GM13977 (cell line): ENCODE measurements at regions of chr10 and their contacts with region 1.

Region 1: DNA sequence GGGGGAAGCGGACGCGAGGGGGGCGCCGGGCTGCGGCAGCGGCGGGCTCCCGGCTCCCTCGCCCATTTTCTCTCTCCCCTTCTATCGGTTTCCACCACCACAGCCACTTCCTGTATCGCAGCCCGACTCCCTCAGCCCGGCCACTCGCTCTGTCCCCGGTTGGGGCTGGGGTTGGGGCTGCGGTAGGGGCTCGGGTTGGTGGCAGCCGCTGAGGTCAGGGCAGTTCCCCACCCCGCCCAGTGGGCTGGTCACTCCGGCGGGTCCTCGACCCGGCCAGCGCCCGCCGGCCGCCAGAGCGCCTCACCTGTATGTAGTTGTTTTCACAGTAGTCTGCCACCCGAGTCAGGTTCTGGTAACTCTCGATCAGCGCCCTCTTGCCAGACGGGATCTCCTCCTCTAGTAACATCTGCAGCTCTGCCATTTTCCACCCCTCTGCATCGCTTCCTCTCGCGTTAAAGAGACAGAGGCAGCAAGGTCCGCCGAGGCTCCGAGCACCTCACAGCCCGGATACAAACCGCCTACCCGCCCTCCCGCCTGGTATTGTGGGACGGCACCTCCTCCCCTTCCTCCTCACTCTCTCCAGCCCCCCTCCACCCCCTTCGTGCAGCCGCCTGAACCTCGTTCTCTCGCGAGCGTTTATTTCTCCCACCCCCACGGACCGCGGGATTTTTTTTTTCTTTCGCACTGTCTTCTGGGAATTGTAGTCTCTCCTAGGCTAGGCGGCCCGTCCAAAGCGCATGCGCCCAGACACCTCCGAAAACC is at the start of gene ABI1:
- DNase-seq: peak; percentile 95
- CTCF ChIP-seq: no peak

Region 2: DNA sequence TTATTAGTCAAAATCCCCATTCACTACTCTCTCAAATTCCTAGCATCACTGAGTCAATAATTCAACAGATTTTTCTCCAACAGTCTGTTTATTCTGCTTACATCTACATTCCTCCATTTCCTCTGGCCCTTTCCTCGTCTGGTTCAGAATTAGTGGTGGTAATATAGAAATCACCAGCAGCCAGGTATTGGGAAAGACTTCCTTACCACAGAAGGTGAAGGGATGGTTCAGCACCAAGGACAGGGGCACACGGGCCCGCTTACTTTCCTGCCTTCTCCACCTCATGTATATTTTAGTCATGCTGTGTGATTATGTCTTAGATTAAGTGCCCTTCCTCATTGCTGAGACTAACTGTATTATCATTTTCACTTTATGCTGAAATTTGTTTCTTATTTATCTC is 492.9 kb before region 1 on chr10:
- in situ Hi-C with region 1: loop called (anchors 25 kb)
- DNase-seq: no peak
- CTCF ChIP-seq: no peak

Region 3: DNA sequence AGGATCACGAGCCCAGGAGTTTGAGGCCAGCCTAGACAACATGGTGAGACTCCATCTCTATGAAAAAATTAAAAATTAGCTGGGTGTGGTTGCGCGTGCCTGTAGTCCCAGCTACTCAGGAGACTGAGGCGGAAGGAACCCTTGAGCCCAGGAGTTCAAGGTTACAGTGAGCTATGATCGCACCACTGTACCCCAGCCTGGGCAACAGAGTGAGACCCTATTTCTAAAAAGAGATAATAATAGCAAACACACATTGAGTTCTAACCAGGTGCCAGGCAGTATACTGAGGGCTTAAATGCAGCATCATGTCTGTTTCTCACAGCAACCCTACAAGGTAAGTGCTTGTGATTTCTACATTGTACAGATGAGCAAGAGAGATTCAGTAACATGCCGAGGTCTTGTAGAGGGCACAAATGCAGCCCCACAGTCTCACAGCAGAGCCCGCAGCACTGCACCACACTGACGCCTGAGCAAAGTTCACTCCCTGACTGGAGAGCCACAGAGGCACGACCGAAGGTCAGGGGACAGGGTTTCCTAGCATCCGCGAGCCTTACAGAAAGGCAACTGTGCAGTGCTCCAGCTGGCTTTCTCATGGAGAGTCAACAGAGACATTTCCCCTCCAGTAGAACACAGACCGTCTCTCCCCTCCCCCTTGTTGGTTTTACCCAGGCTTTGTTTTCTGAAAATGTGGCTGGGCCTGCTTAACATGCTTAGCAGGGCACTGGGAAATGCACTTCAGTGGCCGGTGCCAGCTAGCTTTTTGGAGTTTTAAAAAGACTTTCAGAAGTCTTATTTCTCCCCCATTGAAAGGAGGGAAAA is 126.7 kb before region 1 on chr10:
- in situ Hi-C with region 1: loop called (anchors 5 kb)
- DNase-seq: no peak
- CTCF ChIP-seq: no peak